Activated CD4-positive, alpha-beta T cell treated with anti-CD3 and anti-CD28 coated beads, Interleukin-2, amount 10 ng/mL, durations not matched to agents 24 days and 14 days (primary cell): ENCODE measurements at regions of chr9 and their contacts with region 1.

Region 1: DNA sequence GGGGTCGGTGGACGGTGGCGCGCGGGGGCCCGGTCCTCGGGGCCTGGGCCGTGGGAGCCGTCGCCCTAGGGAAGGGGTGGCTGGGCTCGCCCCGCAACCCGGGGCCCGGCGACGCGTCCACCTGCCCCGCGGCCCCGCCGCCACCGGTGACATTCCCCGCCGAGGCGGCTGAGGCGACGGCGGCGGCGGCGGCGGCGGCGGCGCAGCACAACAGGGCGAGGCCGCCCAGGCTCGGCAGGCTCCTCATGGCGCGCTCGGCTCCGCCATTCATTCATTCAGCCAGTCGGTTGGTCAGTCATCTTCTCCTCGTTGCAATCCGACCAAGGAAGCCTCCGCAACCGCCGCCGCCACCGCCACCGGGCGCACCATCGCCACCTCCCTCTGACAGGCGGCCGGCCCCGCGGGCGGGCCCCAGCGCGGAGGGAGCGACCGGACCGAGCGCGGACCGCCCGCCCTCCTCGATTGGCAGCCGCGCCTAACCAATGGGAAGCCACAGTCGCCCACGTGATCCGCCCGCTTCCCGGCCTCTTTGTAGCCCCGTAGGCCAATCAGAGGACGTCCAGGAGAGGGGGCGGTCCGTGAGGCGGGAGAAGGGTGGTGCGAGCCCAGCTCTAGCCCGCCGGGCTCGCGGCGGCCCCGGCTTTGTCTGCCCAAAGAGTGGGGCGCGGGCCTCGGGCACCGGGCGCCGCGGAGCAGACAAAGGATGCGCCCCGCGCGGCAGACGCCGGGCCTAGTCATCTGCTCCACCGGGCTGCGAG is at the start of gene MEGF9:
- DNase-seq: peak; percentile 99
- H3K4me3 Mint-ChIP-seq: peak within 1 kb of the TSS; percentile 94
- H3K27ac Mint-ChIP-seq: peak within 1 kb of the TSS; percentile 88
- H3K4me1 Mint-ChIP-seq: peaks cover 36% of the 10 kb centered on the region
- H3K27me3 Mint-ChIP-seq: no peaks in the 10 kb centered on the region
- total RNA-seq, gene MEGF9: 4.5 and 4.9 TPM in 2 replicates

Region 2: DNA sequence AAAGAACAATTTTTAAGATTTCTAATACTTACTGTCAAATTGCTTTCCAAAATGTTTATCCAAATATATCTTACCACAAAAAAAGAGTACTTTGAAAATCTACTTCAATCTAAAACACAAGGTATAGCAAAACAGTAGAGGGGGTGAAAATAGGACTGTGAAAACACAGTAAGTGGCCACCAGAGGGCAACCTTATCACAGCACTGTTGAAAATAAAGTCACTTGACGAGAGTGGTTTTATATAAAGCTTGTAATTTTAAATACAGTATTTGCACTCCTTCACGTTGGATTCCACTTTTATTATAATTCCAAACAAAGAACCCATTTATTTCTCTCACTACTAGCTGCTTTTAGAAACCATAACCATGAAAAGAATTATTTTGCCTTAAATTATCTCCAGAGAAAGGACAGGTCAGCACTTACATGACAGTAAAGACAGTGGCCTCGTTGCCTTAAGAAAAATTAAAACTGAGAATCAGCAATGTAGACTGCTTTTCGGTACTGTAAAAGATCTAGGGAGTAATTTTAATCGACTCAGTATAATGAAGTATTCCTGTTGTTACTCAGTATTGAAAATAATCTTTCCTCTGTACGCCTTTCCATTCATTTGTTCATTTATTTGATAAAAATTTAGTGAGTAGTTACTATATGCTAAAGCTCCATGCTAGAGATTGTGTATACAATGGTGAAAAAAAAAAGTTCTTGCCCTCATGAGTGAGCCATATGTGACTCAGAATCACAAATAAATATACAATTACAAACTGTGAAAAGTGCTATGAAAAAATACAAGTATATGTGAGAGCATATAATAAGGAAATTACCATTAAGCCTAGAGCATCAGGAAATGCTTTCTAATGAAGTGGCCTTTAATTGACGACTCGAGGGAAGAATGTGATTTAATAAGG is 94.3 kb before region 1 on chr9:
- intact Hi-C with region 1: loop called (anchors 2 kb)
- DNase-seq: peak; percentile 86
- H3K4me3 Mint-ChIP-seq: no peak overlapping the region
- H3K27ac Mint-ChIP-seq: no peak overlapping the region
- H3K4me1 Mint-ChIP-seq: peaks cover 9% of the 10 kb centered on the region
- H3K27me3 Mint-ChIP-seq: no peaks in the 10 kb centered on the region

Region 3: DNA sequence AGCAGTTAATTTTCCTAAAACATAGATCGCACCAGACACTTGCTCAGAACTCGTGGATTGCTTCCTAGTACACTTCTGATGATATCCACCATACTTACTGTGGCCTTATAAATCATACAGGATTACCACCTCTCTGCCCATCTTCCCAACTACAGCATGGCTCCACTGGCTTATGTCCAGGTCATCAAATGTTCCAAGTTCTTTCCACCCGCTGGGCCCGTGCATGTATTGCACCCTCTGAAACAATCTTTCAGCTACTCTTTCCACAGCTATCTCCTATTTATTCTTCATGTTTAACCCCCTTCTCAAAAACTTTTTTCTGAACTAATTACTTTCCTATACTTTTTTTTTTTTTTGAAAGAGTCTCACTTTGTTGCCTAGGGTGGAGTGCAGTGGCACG is 60.5 kb after region 1 on chr9:
- intact Hi-C with region 1: no loop called
- DNase-seq: no peak
- H3K4me3 Mint-ChIP-seq: no peak overlapping the region
- H3K27ac Mint-ChIP-seq: peak overlapping the region; percentile 13
- H3K4me1 Mint-ChIP-seq: peaks cover 17% of the 10 kb centered on the region
- H3K27me3 Mint-ChIP-seq: no peaks in the 10 kb centered on the region

Region 4: GRCh38 chr9:120792898-120793765 is 78.9 kb after region 1 on chr9 and contains the start of gene FBXW2:
- intact Hi-C with region 1: loop called (anchors 10 kb)
- DNase-seq: peak; percentile 98
- H3K4me3 Mint-ChIP-seq: peak within 1 kb of the TSS; percentile 86
- H3K27ac Mint-ChIP-seq: peak within 1 kb of the TSS; percentile 82
- H3K4me1 Mint-ChIP-seq: peaks cover 43% of the 10 kb centered on the region
- H3K27me3 Mint-ChIP-seq: no peaks in the 10 kb centered on the region
- total RNA-seq, gene FBXW2: 84.9 and 87.9 TPM in 2 replicates

Region 5: GRCh38 chr9:120892748-120893610 is 178.7 kb after region 1 on chr9:
- intact Hi-C with region 1: loop called (anchors 2 kb)
- DNase-seq: peak; percentile 90
- H3K4me3 Mint-ChIP-seq: peak overlapping the region; percentile 85
- H3K27ac Mint-ChIP-seq: peak overlapping the region; percentile 99
- H3K4me1 Mint-ChIP-seq: peaks cover 79% of the 10 kb centered on the region
- H3K27me3 Mint-ChIP-seq: no peaks in the 10 kb centered on the region

Region 6: DNA sequence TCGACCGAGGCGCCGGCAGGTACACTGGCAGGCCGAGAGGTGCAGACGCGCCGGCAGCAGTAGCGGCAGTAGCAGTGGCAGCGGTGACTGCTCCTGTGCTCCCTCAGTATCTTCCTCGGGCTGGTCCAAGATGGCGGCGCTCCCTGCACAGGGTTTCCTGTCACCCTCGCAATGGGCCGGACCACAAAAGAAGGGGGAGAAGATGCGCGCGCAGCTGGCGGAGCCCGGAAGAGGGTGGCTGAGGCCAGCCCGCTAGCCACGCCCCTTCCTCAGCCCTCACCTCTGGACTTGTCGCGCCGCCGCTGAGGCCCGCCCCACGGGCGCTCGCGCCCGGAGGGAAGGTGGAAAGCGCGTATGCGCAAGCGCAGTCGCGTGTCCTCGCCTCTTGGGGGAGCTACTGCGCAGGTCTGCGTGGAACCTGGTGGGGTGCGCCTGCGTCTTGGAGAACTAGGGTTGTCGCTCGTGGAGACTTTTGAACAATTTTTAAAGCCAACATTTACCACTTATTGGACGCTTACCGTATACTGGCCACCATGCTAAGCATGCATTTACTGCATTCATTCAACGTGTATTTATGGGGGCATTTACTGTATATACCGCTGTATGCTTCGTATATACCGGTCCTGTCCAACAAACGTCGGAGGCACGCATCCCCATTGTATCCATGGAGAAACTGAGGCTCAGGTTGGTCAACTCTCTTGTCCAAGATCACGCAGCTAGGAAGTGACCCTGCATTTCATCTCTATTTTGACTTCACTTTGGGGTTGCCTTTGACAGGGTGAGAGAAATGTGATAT is 487.7 kb after region 1 on chr9 and contains the start of gene RAB14:
- intact Hi-C with region 1: loop called (anchors 5 kb)
- DNase-seq: peak; percentile 100
- H3K4me3 Mint-ChIP-seq: peak within 1 kb of the TSS; percentile 94
- H3K27ac Mint-ChIP-seq: peak within 1 kb of the TSS; percentile 91
- H3K4me1 Mint-ChIP-seq: peaks cover 40% of the 10 kb centered on the region
- H3K27me3 Mint-ChIP-seq: peaks cover 3% of the 10 kb centered on the region
- total RNA-seq, gene RAB14: 61.4 and 65.1 TPM in 2 replicates

Region 7: GRCh38 chr9:121744687-121745395 is 1030.6 kb after region 1 on chr9:
- intact Hi-C with region 1: no loop called
- DNase-seq: no peak
- H3K4me3 Mint-ChIP-seq: no peak overlapping the region
- H3K27ac Mint-ChIP-seq: no peak overlapping the region
- H3K4me1 Mint-ChIP-seq: peaks cover 13% of the 10 kb centered on the region
- H3K27me3 Mint-ChIP-seq: peaks cover under 1% of the 10 kb centered on the region